A673 (cell line): ENCODE measurements at regions of chr20 and their contacts with region 1.

Region 1: GRCh38 chr20:46174469-46175128 is 56.5 kb downstream of the CD40 start:
- DNase-seq: peak; percentile 76
- H3K4me3 ChIP-seq: no peak overlapping the region
- H3K27ac ChIP-seq: no peak overlapping the region
- H3K4me1 ChIP-seq: no peaks in the 10 kb centered on the region
- H3K27me3 ChIP-seq: peaks cover 36% of the 10 kb centered on the region
- CTCF ChIP-seq: peak; percentile 59

Region 2: DNA sequence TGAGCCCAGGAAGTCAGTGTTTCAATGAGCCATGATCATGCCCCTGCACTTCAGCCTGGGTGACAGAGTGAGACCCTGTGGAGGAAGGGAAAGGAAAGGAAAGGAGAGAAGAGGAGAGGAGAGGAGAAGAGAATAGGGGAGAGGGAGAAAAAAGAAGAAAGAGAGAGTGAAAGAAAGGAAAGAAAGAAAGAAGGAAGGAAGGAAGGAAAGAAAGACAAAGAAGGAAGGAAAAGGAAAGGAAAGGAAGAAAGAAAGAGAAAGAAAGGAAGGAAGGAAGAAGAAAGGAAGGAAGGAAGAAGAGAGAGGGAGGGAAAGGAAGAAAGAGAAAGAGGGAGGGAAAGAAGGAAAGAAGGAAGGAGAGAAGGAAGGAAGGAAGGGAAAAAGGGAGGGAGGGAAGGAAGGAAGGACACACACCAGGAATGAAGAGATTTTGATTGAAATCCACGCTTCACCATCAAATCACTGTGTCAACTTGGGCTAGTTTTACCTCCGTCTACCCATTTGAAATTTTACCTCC is 609.8 kb before region 1 on chr20:
- CTCF ChIA-PET with region 1: no interaction called
- POLR2A ChIA-PET with region 1: no interaction called
- intact Hi-C with region 1: no loop called
- DNase-seq: no peak
- H3K4me3 ChIP-seq: no peak overlapping the region
- H3K27ac ChIP-seq: no peak overlapping the region
- H3K4me1 ChIP-seq: no peaks in the 10 kb centered on the region
- H3K27me3 ChIP-seq: peaks cover 18% of the 10 kb centered on the region
- CTCF ChIP-seq: no peak

Region 3: DNA sequence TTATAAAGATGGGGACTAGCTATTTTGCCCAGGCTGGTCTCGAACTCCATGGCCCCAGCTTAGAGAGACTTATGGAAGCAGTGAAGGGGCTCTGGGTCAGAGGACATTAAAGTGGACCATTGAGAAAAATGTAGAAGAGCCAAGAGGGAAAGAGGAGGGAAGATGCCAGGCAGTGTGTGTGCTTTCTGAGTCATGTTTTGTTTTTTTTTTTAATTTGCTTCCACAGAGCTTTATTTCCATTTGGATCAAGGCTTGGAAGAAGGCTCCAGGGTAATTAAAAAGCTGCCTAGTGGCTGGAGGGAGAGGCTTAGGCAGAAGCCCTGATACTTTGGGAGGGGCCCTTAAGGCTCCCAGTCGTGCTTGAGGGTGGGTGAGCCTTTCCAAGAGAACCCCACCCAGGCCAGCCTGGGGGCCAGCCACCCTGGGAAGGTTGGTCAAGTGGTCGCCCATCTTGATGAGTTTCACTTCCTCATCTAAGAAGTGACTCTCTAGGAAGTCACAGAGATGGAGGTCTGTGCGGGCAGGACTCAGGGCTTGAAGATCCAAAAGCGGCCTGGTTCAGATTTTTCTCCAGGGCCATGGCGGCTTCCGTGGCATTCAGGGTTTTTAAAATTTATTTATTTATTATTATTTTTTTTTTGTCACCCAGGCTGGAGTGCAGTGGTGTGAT is 199.6 kb before region 1 on chr20:
- CTCF ChIA-PET with region 1: no interaction called
- POLR2A ChIA-PET with region 1: no interaction called
- intact Hi-C with region 1: no loop called
- DNase-seq: no peak
- H3K4me3 ChIP-seq: no peak overlapping the region
- H3K27ac ChIP-seq: no peak overlapping the region
- H3K4me1 ChIP-seq: peaks cover 8% of the 10 kb centered on the region
- H3K27me3 ChIP-seq: no peaks in the 10 kb centered on the region
- CTCF ChIP-seq: no peak

Region 4: DNA sequence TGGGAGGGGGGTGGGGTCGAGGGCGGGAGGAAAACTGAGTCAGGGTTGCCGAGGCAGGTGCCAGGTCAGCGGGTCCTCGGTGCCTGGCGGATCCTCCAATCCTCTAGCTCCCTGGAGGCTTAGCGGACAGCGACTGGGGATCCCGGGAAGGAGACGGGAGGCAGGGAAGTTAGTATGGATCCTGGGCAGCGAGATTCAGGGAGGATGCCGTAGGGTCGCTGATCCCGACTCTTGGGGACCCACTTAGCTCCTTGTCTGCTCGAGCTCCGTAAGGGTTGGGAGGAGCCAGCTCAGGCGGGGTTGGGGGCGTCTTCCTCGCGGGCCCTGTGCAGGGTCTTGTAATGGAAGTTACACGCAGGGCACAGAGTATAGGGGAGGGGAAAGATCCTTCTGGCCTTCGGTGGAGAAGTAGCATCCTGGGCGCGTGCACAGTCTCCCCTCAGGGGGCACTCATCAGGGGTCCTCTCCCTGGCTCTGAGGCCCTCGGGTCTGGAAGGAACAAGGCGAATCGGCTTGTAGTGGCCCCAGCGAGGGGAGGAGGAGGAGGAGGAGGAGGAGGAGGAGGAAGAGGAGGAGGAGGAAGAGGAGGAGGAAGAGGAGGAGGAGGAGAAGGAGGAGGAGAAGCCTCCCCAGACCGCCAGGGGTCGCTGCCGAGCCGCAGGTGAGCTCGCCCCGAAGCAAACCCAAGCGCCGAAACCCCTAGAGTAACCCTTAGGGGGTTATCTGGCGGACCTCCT is 152.0 kb before region 1 on chr20:
- CTCF ChIA-PET with region 1: interaction called, 4 read pairs
- POLR2A ChIA-PET with region 1: no interaction called
- intact Hi-C with region 1: loop called (anchors 2 kb)
- DNase-seq: peak; percentile 65
- H3K4me3 ChIP-seq: peak overlapping the region; percentile 92
- H3K27ac ChIP-seq: no peak overlapping the region
- H3K4me1 ChIP-seq: peaks cover 13% of the 10 kb centered on the region
- H3K27me3 ChIP-seq: no peaks in the 10 kb centered on the region
- CTCF ChIP-seq: peak; percentile 81

Region 5: DNA sequence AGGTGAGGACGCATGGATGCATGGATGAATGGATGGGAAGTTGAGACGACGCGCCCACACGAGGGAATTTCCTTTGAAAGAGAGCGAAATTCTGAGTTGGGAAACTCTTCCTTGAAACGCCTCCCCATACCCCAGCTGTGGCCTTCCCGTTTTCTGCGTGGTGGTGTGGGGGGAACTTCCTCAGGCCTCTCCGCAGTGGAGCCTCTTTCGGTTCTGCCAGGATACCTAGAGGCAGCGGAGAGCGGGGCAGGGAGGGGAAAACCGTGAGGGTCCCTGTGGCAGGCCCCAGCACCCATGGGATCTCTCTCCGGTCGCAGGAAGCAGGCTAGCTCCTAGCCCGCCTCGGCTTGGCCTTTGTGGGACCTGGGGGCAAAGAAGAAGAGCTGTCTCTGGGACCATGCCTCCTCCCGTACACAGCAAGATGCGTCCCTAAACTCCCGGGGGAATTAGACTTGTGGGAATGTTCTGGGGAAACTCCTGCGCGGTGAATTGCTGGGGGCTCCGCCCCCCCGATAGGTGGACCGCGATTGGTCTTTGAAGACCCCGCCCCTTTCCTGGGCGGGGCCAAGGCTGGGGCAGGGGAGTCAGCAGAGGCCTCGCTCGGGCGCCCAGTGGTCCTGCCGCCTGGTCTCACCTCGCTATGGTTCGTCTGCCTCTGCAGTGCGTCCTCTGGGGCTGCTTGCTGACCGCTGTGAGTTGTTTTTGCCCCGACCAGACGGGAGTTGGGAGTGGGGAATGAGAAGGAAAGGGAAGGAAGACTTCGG is 56.7 kb before region 1 on chr20 and contains the start of gene CD40:
- CTCF ChIA-PET with region 1: no interaction called
- POLR2A ChIA-PET with region 1: no interaction called
- intact Hi-C with region 1: loop called (anchors 10 kb)
- DNase-seq: peak; percentile 96
- H3K4me3 ChIP-seq: peak within 1 kb of the TSS; percentile 55
- H3K27ac ChIP-seq: peak within 1 kb of the TSS; percentile 76
- H3K4me1 ChIP-seq: peaks cover 9% of the 10 kb centered on the region
- H3K27me3 ChIP-seq: no peaks in the 10 kb centered on the region
- CTCF ChIP-seq: no peak
- total RNA-seq, gene CD40: 16.3 and 18.7 TPM in 2 replicates